Activated B cell treated with CpG ODN at 0.5 μM for 24 hours (primary cell): ENCODE measurements at regions of chr2 and their contacts with region 1.

Region 1: DNA sequence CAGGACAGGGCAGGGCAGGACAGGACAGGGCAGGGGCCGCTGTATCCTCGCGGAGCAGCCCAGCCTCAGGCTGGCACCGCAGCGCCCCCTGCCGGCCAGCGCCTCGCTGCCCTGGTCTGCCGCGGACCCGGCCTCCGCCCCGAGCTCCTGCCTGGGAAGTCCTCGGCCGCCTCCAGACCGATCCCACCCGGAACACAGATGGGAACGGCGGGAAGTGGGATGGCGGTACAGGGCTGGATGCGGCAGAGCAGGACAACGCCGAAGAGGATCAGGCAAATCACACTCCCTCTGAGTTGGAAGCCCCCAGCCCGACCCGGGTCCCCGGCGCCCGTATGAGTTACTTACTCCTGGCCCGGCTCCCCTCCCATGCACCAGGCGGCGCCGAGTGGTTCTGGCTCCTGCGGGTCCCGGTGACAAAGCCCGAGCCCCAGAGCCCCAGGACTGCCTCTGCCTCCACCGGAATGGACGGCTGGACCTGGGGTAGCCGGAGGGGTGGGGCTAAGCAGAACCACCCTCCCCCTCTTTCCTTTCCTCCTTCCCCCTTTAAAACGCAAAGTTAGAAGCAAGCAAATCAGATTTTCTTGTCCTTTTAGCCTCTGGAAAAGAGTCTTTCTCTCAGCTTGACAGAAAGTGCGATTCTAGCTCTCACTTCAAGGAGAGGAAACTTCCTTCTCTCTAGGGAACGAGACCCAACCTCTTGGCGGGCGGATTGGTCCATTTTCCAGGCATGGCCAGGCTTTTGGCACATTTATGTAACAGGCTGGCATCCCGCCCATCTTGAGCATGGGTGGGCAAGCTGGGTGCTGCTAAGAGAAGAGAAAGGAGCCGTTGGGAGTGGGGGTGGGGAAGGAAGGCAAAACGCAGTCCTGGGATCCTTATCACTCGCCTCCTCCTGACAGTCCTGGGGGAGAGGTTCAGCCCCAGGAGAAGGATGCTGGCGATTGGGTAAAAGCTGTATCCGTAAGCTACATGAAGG is at the start of gene TP53I3:
- DNase-seq: peak; percentile 93
- ATAC-seq: peak; percentile 85
- H3K4me3 Mint-ChIP-seq: peak within 1 kb of the TSS; percentile 92
- H3K27ac Mint-ChIP-seq: peak within 1 kb of the TSS; percentile 92
- H3K4me1 Mint-ChIP-seq: peaks cover 16% of the 10 kb centered on the region
- H3K27me3 Mint-ChIP-seq: no peaks in the 10 kb centered on the region
- CTCF ChIP-seq: peak; percentile 72
- total RNA-seq, gene TP53I3: 4.4 and 6.3 TPM in 2 replicates

Region 2: DNA sequence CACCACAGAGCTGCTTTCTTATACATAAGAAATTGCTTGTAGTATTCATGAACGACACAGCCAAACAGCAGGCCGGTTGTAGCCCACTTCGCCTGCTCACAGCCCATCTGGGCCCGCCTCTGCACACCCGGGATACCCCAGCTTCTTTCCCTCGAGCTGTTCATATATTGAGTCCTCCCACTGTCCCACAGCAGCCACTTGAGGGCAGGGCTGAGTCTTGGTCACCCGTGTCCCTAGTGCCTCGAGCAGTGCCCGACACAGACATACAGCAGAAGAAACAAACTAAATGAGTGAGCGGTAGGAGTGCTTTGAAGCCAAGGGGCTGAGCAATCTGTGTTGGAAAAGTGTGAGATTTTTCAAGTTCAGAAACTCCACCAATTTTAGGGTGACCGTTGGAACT is 448.2 kb before region 1 on chr2:
- CTCF ChIA-PET with region 1: no interaction called
- POLR2A ChIA-PET with region 1: no interaction called
- intact Hi-C with region 1: loop called (anchors 10 kb)
- DNase-seq: no peak
- ATAC-seq: no peak
- H3K4me3 Mint-ChIP-seq: no peak overlapping the region
- H3K27ac Mint-ChIP-seq: no peak overlapping the region
- H3K4me1 Mint-ChIP-seq: no peaks in the 10 kb centered on the region
- H3K27me3 Mint-ChIP-seq: no peaks in the 10 kb centered on the region
- CTCF ChIP-seq: no peak

Region 3: DNA sequence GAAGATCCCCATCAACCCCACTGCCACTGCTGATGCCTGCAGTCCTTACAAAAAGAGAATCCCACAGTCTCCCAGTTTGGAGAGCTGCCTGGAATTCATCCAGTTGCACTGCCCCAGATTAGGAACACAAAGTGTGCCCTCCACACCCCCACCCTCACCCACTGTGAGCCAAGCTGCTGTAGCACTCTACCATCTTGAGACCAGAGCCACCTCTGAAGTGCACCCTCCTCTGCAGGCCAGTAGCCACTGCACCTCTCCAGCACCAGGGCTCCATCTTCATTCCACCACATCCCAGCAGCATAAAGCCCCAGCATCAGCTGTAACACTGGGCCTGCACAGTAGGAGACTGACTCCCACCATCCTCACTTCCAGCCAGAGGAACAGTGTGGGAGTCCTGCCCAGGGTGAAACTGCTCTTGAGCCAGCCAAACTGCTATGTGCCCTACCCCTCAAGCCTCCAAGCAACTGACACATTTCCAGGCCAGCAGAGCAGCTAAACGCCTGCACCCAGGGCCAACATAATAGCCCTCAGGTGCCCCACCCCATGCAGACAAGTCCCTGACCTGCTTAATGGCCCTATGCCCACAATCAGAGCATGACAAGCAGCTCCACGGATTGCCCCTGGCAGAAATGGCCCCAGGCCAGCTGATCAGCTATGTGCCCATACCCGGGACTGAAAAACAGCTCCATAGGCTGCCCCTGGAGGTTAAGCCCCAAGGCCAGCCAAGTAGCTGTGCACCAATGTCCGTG is 363.8 kb before region 1 on chr2:
- CTCF ChIA-PET with region 1: no interaction called
- POLR2A ChIA-PET with region 1: no interaction called
- intact Hi-C with region 1: no loop called
- DNase-seq: no peak
- ATAC-seq: no peak
- H3K4me3 Mint-ChIP-seq: no peak overlapping the region
- H3K27ac Mint-ChIP-seq: no peak overlapping the region
- H3K4me1 Mint-ChIP-seq: peaks cover 3% of the 10 kb centered on the region
- H3K27me3 Mint-ChIP-seq: no peaks in the 10 kb centered on the region
- CTCF ChIP-seq: no peak

Region 4: GRCh38 chr2:23843051-23843976 is 241.4 kb before region 1 on chr2:
- CTCF ChIA-PET with region 1: no interaction called
- POLR2A ChIA-PET with region 1: no interaction called
- intact Hi-C with region 1: no loop called
- DNase-seq: no peak
- ATAC-seq: no peak
- H3K4me3 Mint-ChIP-seq: no peak overlapping the region
- H3K27ac Mint-ChIP-seq: no peak overlapping the region
- H3K4me1 Mint-ChIP-seq: no peaks in the 10 kb centered on the region
- H3K27me3 Mint-ChIP-seq: no peaks in the 10 kb centered on the region
- CTCF ChIP-seq: no peak

Region 5: DNA sequence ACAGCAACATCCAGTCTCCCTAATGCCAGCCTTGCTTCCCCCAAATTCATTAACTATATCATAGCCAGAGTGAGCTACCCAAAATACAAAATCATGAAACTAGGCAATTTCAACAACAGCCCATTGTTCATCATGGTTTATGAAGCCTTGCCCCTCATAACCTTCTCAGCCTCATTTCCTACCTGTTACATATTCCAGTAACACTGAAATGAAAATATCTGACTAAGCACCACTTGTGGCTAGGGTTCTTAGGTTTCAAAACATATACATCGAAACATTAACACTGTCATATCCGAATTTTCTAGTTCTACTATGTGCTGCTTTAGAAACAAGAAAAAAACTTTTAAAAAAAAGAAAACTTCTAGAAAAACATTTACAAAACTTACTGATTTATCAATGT is 217.2 kb before region 1 on chr2:
- CTCF ChIA-PET with region 1: interaction called, 12 read pairs
- POLR2A ChIA-PET with region 1: interaction called, 3 read pairs
- intact Hi-C with region 1: loop called (anchors 5 kb)
- DNase-seq: no peak
- ATAC-seq: no peak
- H3K4me3 Mint-ChIP-seq: no peak overlapping the region
- H3K27ac Mint-ChIP-seq: peak overlapping the region; percentile 8
- H3K4me1 Mint-ChIP-seq: no peaks in the 10 kb centered on the region
- H3K27me3 Mint-ChIP-seq: no peaks in the 10 kb centered on the region
- CTCF ChIP-seq: no peak

Region 6: GRCh38 chr2:24046930-24047702 is 37.6 kb before region 1 on chr2 and contains the start of gene WDCP:
- CTCF ChIA-PET with region 1: interaction called, 6 read pairs
- POLR2A ChIA-PET with region 1: interaction called, 15 read pairs
- intact Hi-C with region 1: loop called (anchors 2 kb)
- DNase-seq: peak; percentile 79
- ATAC-seq: peak; percentile 98
- H3K4me3 Mint-ChIP-seq: peak within 1 kb of the TSS; percentile 96
- H3K27ac Mint-ChIP-seq: peak within 1 kb of the TSS; percentile 89
- H3K4me1 Mint-ChIP-seq: peaks cover 29% of the 10 kb centered on the region
- H3K27me3 Mint-ChIP-seq: no peaks in the 10 kb centered on the region
- CTCF ChIP-seq: no peak
- total RNA-seq, gene WDCP: 20.0 and 20.6 TPM in 2 replicates

Region 7: GRCh38 chr2:24164125-24164973 is 79.7 kb after region 1 on chr2:
- CTCF ChIA-PET with region 1: interaction called, 4 read pairs
- POLR2A ChIA-PET with region 1: no interaction called
- intact Hi-C with region 1: loop called (anchors 1 kb)
- DNase-seq: peak; percentile 40
- ATAC-seq: peak; percentile 81
- H3K4me3 Mint-ChIP-seq: peak overlapping the region; percentile 61
- H3K27ac Mint-ChIP-seq: peak overlapping the region; percentile 71
- H3K4me1 Mint-ChIP-seq: peaks cover 12% of the 10 kb centered on the region
- H3K27me3 Mint-ChIP-seq: no peaks in the 10 kb centered on the region
- CTCF ChIP-seq: peak; percentile 16

Region 8: DNA sequence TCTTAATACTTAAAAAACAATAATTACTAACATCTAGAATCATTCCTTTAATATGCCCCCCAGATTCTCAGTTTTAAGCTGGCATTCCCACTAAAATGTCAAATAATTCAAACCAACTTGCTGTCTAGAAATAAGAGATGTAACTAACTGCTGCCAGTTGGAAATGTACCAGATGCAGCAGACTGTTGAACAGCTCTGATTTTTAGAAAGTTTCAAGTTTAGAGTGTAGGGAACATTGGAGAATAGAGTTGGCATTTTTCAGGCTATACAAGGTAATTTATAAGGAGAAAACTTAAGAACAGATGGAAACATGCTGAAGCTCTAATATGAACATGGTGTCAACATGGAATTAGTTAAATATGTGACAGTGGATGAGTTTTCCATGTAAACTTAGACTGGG is 607.1 kb after region 1 on chr2:
- CTCF ChIA-PET with region 1: no interaction called
- POLR2A ChIA-PET with region 1: no interaction called
- intact Hi-C with region 1: no loop called
- DNase-seq: no peak
- ATAC-seq: no peak
- H3K4me3 Mint-ChIP-seq: no peak overlapping the region
- H3K27ac Mint-ChIP-seq: no peak overlapping the region
- H3K4me1 Mint-ChIP-seq: no peaks in the 10 kb centered on the region
- H3K27me3 Mint-ChIP-seq: no peaks in the 10 kb centered on the region
- CTCF ChIP-seq: no peak